Adrenal gland (tissue), 19 donors: ENCODE measurements at regions of chr21 and their contacts with region 1.

Region 1: DNA sequence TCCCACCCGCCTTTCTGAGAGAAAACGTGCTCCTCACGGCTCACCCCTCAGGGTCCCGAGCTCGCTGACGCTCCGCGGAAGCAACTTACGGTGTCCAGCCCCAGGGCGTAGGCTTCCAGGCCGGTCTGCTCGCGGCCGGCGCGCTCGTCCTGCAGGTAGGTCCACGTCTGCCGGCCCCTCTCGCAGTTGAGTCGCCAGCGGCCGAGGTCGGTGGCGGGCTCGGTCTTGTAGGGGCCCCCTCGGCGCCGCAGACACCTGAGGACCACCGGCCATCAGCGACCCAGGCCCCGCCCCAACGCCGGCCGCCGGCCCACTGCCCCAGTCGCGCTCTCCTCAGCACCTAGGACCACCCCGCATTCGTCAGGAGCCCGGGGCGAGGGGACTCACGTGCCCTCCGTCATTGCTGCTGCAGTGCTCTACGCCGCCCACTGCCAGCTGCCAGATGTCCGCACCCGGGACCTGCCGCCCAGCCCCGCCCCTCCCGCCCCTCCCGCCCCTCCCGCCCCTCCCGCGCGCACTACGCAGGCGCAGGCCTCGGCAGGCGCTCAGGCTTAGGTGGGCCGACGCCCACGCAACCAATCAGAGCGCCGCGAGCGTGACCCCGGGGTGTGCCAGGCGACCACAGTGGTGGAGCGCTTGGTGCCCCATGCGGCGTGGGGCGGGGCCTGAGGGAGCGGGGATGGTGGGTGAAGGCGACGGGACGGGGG is at the start of gene LSS:
- DNase-seq: peak; percentile 98 to 100 (median 99)
- H3K4me3 ChIP-seq: peak within 1 kb of the TSS; percentile 10 to 99 (median 82)
- H3K27ac ChIP-seq: peak within 1 kb of the TSS; percentile 48 to 95 (median 86)
- H3K4me1 ChIP-seq: peaks cover 12 to 42% of the 10 kb centered on the region in 2 donors
- H3K27me3 ChIP-seq: no peaks in the 10 kb centered on the region
- CTCF ChIP-seq: no peak
- POLR2A ChIP-seq: peak; percentile 61 to 81
- total RNA-seq, gene LSS: 49.0 to 246 (median 85.2) TPM

Region 2: DNA sequence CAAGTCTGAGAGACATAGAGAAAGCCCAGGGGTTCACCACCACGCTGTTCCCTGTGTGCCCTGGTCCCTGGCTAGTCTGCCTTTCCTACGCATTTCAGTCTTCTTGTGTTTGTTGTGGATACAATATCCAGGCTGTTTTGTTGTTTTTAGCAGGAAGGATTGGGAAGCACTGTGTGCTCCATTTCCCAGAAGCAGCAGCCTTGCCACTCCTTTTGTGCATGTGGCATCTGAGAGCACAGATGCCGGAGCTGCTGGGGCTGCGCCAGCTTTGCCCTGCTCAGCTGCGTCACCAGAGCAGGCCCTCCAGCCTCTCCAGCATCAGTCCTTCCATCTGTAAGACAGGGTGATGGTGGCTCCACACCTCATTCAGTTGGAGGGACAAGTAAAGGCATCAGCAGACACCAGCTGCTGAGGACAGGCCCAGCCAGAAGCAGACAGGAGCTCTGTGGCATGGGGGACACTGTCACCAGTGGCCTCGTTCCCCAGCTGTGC is 341.3 kb before region 1 on chr21:
- intact Hi-C with region 1: no loop called
- DNase-seq: peak in 1 of 7 donors; percentile 86
- H3K4me3 ChIP-seq: no peak overlapping the region
- H3K27ac ChIP-seq: peak overlapping the region in 1 of 5 donors; percentile 52
- H3K4me1 ChIP-seq: peaks cover 0 to 13% of the 10 kb centered on the region in 2 donors
- H3K27me3 ChIP-seq: no peaks in the 10 kb centered on the region
- CTCF ChIP-seq: no peak
- POLR2A ChIP-seq: no peak

Region 3: GRCh38 chr21:46144464-46145070 is 83.9 kb before region 1 on chr21:
- intact Hi-C with region 1: loop called in 1 of 2 experiments (anchors 10 kb)
- DNase-seq: no peak
- H3K4me3 ChIP-seq: no peak overlapping the region
- H3K27ac ChIP-seq: peak overlapping the region in 1 of 5 donors; percentile 82
- H3K4me1 ChIP-seq: peaks cover 0 to 4% of the 10 kb centered on the region in 2 donors
- H3K27me3 ChIP-seq: no peaks in the 10 kb centered on the region
- CTCF ChIP-seq: no peak
- POLR2A ChIP-seq: no peak